ENCODE measurements at regions of chr17 and their contacts with region 1.

Region 1: DNA sequence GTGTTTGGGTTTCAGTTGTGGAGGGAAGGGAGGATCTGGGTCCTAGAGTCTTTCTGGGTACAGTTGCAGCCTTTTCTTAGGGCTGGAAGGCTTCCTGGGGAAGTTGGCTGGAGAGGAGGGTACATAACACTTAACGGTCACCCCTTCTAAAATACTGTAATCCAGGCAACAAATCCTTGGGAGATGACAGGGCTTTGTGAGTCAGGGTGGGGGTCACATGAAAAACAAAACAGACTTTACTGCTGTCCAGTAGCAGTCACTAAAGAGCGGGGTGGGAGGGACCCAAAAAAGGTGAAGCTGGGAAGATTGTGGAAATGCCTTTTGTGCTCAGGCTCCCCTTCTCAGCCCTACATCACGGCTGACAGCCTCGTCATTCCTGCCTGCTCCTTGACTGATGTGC is 6.3 kb downstream of the SAP30BP start:
- DNase-seq: no peak
- ATAC-seq: no peak
- H3K4me3 Mint-ChIP-seq: no peak overlapping the region
- H3K27ac Mint-ChIP-seq: peak overlapping the region; percentile 11
- H3K4me1 Mint-ChIP-seq: peaks cover 25% of the 10 kb centered on the region
- H3K27me3 Mint-ChIP-seq: no peaks in the 10 kb centered on the region

Region 2: DNA sequence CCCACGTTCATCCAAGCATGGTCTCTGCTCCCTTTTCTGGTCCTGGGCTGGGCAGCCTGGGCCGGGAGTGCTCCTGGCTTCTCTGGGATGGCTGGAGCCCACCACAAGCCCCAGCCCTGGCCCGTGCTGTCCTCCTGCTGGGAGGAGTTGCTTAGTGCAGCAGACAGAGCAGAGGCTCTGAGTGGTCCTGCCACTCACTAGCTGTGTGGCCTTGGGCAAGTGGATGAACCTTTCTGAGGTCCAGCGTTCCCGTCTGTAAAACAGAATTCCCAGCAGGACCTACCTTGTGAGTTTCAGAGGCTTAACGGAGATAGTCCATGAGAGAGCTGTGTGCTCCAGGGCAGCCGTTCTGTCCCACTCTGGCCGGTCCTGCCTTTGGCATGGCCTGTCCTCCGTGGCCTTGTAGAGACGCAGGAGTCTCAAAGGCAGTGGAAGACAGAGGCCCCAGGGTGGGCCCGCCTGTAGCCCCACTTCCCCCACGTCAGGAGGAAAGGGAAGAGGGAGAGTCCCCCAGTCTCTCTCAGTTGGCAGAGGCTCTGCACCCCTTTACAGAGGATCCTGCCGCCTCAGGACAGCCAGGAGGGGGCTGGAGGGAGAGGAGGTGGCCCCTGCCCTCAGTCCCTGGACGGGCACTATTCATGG is 78.1 kb before region 1 on chr17:
- CTCF ChIA-PET with region 1: no interaction called
- DNase-seq: no peak
- ATAC-seq: no peak
- H3K4me3 Mint-ChIP-seq: no peak overlapping the region
- H3K27ac Mint-ChIP-seq: no peak overlapping the region
- H3K4me1 Mint-ChIP-seq: peaks cover 6% of the 10 kb centered on the region
- H3K27me3 Mint-ChIP-seq: no peaks in the 10 kb centered on the region

Region 3: DNA sequence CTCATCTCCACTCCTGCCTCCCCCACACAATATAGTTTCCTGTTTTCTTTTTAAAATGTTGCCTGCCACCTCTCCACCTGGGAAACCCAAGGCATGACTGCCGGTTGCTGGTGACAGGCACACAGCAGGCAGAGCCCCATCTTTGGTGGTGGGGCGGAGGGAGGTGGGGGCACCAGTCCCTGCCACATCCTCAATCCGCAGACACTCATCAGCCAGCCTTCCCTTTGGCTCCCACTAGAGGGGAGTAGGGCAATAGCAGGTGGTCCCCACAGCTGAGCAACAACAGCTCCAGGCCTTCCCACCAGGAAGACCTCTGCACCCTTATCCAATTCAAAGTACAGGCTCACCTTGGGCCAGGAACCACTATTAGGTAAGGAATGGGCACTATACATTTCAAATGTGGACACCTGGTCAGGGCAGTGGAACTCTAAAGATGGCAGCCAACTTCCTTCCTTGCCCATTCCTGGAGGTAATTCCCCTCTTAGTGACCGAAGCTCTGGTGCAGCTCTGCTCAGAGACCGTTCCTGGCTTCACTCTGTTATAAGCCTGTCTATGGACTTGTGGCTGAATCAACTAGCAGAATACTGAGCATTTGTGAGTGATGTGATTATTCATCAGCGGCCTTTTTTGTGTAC is 20.5 kb before region 1 on chr17:
- CTCF ChIA-PET with region 1: interaction called, 13 read pairs
- DNase-seq: peak; percentile 62
- ATAC-seq: peak; percentile 87
- H3K4me3 Mint-ChIP-seq: no peak overlapping the region
- H3K27ac Mint-ChIP-seq: peak overlapping the region; percentile 54
- H3K4me1 Mint-ChIP-seq: peaks cover 5% of the 10 kb centered on the region
- H3K27me3 Mint-ChIP-seq: no peaks in the 10 kb centered on the region

Region 4: GRCh38 chr17:75693500-75694481 is 20.3 kb after region 1 on chr17:
- CTCF ChIA-PET with region 1: interaction called, 11 read pairs
- DNase-seq: no peak
- ATAC-seq: no peak
- H3K4me3 Mint-ChIP-seq: no peak overlapping the region
- H3K27ac Mint-ChIP-seq: no peak overlapping the region
- H3K4me1 Mint-ChIP-seq: peaks cover 27% of the 10 kb centered on the region
- H3K27me3 Mint-ChIP-seq: no peaks in the 10 kb centered on the region

Region 5: DNA sequence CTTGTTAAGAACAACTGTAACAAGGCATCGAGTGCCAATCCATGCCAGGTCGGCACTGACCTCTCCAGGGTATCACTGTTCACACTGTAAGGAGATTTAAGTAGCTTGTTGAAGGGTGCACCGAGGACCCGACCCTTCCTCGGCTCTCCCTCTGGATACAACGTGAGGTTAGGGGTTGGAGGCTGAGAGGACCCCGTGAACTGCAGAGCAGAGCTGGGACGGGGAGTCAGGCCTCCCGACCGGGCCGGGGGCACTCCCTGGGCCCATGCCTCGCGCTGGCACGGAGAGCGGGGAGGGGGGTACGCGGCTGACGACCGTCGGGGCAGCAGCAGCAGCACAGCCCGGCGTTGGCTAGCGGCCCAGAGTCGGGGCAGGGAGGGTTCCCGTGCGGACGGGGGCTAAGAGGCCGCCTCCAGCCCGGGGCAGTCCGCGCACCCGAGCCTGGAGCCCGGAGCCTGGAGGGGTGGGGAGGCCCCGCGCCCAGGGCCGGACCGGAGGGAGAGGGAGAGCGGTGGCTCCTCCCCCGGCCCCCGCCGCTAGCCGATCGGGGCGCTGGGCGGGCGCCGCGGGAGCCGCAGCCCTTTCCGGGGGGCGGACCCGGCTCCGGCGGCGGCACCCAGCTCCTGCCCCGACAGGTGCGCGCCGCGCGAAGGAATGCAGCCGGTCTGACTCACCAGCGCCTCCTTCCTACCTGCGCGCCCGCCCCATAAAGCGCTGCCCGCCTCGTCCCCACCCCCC is 47.4 kb after region 1 on chr17 and contains the start of gene ITGB4:
- CTCF ChIA-PET with region 1: no interaction called
- DNase-seq: peak; percentile 64
- ATAC-seq: peak; percentile 95
- H3K4me3 Mint-ChIP-seq: peak within 1 kb of the TSS; percentile 69
- H3K27ac Mint-ChIP-seq: no peak within 1 kb of the TSS
- H3K4me1 Mint-ChIP-seq: peaks cover 3% of the 10 kb centered on the region
- H3K27me3 Mint-ChIP-seq: peaks cover 31% of the 10 kb centered on the region
- total RNA-seq, gene ITGB4: 1.0 to 1.1 TPM